Activated CD4-positive, alpha-beta T cell treated with anti-CD3 and anti-CD28 coated beads for 36 hours (primary cell): ENCODE measurements at regions of chr1 and their contacts with region 1.

Region 1: GRCh38 chr1:240956020-240956419 is 344.1 kb upstream of the GREM2 start:
- DNase-seq: no peak
- ATAC-seq: no peak
- H3K4me3 Mint-ChIP-seq: no peak overlapping the region
- H3K27ac Mint-ChIP-seq: no peak overlapping the region
- H3K4me1 Mint-ChIP-seq: no peaks in the 10 kb centered on the region
- H3K27me3 Mint-ChIP-seq: no peaks in the 10 kb centered on the region

Region 2: GRCh38 chr1:241012708-241013340 is 56.8 kb after region 1 on chr1:
- CTCF ChIA-PET with region 1: no interaction called
- POLR2A ChIA-PET with region 1: no interaction called
- intact Hi-C with region 1: loop called in 1 of 2 experiments (anchors 10 kb)
- DNase-seq: no peak
- ATAC-seq: no peak
- H3K4me3 Mint-ChIP-seq: no peak overlapping the region
- H3K27ac Mint-ChIP-seq: no peak overlapping the region
- H3K4me1 Mint-ChIP-seq: no peaks in the 10 kb centered on the region
- H3K27me3 Mint-ChIP-seq: no peaks in the 10 kb centered on the region